ENCODE measurements at regions of chr14 and their contacts with region 1.

Region 1: GRCh38 chr14:54175298-54175942 is 218.8 kb upstream of the BMP4 start:
- DNase-seq: peak; percentile 22
- H3K4me3 Mint-ChIP-seq: no peak overlapping the region
- H3K27ac Mint-ChIP-seq: no peak overlapping the region
- H3K4me1 Mint-ChIP-seq: peaks cover 4% of the 10 kb centered on the region
- H3K27me3 Mint-ChIP-seq: peaks cover 51% of the 10 kb centered on the region

Region 2: GRCh38 chr14:53539489-53540126 is 635.8 kb before region 1 on chr14:
- intact Hi-C with region 1: loop called (anchors 5 kb)
- DNase-seq: peak; percentile 32
- H3K4me3 Mint-ChIP-seq: no peak overlapping the region
- H3K27ac Mint-ChIP-seq: no peak overlapping the region
- H3K4me1 Mint-ChIP-seq: peaks cover 3% of the 10 kb centered on the region
- H3K27me3 Mint-ChIP-seq: peaks cover 7% of the 10 kb centered on the region

Region 3: GRCh38 chr14:54347997-54348611 is 172.7 kb after region 1 on chr14:
- intact Hi-C with region 1: loop called (anchors 10 kb)
- DNase-seq: no peak
- H3K4me3 Mint-ChIP-seq: no peak overlapping the region
- H3K27ac Mint-ChIP-seq: no peak overlapping the region
- H3K4me1 Mint-ChIP-seq: peaks cover 3% of the 10 kb centered on the region
- H3K27me3 Mint-ChIP-seq: peaks cover 16% of the 10 kb centered on the region

Region 4: DNA sequence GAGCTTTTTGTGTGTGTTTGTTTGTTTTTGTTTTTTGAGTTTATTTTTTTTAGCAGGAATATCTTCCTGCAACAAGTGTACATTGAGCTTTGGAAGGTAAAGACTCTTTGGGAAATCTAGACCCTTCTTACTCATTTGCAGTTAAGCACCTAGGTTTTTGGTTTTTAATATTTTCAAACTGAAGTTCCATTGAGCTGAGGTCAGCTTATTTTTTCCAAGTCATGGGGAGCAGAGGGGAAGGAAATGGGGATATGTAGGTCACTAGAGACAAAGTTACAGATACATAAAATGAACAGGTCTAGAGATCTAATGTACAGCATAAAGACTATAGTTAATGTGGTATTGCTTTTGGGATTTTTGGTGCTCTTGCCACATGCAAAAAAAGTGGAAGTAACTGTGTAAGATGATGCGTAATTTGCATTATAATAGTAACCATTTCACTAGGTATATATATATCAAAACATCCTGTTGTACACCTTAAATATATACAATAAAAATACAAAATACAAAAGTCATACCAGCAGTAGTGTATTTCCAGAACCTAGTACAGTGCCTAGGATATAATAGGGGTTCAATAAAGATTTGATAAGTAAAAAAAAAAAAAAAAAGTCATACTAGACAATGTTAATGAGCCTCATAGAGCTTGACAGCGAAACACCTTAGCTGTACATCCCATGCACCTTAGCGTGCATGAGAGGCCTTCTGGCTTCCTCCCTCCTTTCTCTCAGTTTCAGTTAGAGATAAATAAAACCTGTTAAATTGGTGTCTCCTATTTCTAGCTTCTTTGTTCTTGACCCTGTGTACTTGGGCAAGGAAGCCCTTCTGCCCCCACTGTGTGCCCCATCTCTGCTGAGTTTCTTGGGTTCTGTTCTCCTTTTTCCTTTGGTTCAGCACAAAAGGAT is 356.9 kb after region 1 on chr14:
- intact Hi-C with region 1: no loop called
- DNase-seq: no peak
- H3K4me3 Mint-ChIP-seq: no peak overlapping the region
- H3K27ac Mint-ChIP-seq: no peak overlapping the region
- H3K4me1 Mint-ChIP-seq: peaks cover 4% of the 10 kb centered on the region
- H3K27me3 Mint-ChIP-seq: no peaks in the 10 kb centered on the region

Region 5: DNA sequence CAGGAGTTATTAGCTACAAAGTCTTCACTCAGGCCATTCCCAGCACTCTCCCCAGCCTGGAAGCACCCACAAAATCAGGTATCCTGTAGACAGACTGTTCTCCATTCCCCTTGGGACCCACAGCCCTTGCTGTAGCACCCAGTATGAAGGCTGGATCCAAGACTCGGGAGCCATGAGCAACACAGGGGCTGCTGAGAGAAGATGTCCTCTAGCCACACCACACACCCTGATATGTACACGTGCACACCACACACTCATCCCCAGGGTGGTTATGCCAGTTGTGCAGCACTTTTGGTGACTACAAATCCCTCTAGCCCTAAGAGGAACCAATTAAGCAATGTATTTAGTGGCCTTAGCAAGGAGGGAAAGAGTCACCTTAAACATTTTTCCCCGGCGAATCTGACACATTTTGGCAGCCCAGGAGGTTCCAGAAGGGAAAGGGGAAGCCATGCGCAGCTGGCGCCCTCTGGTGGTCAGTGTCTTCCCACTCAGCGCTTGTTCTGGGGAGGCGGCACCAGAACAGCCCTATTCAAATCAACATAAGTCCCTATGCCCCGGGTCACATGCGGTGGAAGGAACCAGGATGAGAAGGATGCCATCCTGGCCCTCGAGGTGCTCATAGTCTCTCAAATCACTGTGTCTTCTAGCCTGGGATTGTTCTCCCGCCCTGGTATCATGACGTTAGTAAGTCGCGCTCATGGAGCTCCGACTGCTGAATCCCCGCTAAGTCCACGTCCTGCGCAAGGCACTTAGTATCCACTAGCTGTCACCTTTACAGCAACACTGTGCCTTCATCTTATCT is 630.3 kb after region 1 on chr14:
- intact Hi-C with region 1: no loop called
- DNase-seq: peak; percentile 56
- H3K4me3 Mint-ChIP-seq: no peak overlapping the region
- H3K27ac Mint-ChIP-seq: no peak overlapping the region
- H3K4me1 Mint-ChIP-seq: peaks cover 2% of the 10 kb centered on the region
- H3K27me3 Mint-ChIP-seq: peaks cover 34% of the 10 kb centered on the region